Ovary (tissue), 10 donors: ENCODE measurements at regions of chr5 and their contacts with region 1.

Region 1: DNA sequence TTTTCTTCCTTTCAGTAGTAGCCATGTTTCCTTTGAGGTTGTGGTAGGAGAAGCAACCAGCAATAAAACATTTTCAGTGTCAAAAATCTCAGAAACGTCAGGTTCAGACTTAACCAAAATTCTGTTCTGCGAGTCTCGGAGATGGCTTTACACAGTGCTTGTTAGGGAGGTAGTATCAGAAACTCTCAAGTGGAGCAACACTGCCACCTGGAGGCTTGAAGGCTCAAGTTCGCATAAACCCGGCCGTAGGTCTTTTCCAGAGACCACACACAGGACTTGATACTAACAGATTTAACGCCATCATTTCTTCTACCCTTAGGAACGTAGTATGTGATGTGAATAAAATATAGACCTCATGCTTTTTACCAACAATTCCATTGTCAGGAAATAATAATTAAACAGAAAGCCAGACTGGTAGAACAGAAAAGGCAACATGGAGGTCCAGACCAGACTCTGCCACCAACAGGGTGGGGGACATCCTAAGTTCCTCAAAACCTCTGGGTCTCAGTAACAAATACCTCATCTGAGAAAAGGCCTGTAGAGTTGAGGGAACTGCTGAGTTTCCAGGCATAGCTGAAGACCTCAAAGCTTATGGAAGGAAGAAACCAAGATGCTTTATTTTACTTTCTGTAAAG is 8.5 kb downstream of the PTGER4 start:
- DNase-seq: peak; percentile 60 to 82 (median 79)
- H3K4me3 ChIP-seq: no peak overlapping the region
- H3K27ac ChIP-seq: no peak overlapping the region
- H3K4me1 ChIP-seq: no peaks in the 10 kb centered on the region
- H3K27me3 ChIP-seq: no peaks in the 10 kb centered on the region
- CTCF ChIP-seq: peak; percentile 48 to 85 (median 66)
- EP300 ChIP-seq: no peak
- POLR2A ChIP-seq: no peak

Region 2: DNA sequence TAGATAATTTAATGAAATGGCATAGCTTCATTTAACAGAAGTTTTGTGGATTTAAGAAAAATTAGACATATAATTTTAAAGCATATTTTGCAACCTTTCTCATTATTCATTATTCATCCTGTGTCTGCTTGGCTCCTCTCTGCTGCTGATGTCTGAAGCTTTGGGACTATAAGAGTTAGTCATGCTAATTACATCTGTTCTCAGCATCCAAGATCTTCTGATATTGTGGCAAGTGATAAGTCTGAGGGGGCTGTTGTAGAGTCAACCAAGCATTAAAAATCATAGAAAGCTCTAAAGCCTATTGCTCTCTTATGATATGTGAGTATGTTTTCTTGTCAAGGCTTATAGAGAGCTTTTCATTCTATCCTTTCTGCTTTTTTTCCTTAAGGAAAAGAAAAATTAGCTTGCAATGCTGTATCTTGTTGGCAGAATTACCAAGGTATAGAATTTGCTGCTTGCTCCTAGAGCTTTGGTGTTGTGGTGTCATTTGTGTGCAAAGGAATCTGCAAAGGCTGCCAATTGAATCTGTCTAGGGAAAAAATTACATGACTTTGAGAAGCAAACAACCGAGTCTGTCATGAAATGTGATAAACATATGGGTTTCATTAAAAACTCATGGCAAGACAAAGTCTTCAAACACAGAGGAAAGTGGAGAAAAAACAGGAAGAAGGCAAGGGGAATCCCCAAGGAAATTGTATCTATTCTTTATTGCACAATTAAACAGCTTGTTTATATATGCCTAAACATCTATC is 1107.4 kb before region 1 on chr5:
- intact Hi-C with region 1: loop called in 2 of 4 experiments (anchors 10 kb)
- DNase-seq: no peak
- H3K4me3 ChIP-seq: no peak overlapping the region
- H3K27ac ChIP-seq: no peak overlapping the region
- H3K4me1 ChIP-seq: no peaks in the 10 kb centered on the region
- H3K27me3 ChIP-seq: no peaks in the 10 kb centered on the region
- CTCF ChIP-seq: no peak
- EP300 ChIP-seq: no peak
- POLR2A ChIP-seq: no peak

Region 3: DNA sequence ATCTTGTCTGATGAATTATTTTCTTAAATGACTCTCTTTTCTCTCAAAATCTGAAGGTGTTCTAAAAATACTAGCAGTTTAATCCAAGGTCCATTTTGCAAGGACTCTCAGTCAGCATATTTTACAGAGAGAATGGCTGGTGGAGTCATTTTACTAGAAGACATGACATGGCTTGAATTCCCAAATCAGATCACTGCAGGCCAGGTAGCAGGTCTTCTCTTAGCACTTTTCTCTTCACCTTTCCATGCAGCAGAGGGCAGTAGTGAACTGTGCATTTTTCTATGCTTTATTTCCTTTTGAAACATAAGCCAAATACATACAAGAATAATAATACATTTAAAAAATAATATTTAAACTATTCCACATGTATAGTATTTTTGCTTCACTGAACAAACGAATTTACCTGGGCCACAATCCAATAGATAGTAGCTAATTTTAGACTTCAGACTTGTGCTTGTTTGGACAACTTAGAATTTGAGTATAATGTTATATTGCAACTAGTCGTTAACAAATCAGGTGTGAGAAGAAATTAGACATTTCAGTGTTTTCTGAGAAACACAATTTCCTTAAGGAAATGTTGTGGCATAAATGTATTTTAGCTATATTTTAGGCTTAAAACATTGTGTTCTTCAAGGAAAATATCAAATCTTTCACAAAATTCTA is 974.1 kb before region 1 on chr5:
- intact Hi-C with region 1: loop called in 1 of 4 experiments (anchors 10 kb)
- DNase-seq: peak in 1 of 5 donors; percentile 20
- H3K4me3 ChIP-seq: no peak overlapping the region
- H3K27ac ChIP-seq: no peak overlapping the region
- H3K4me1 ChIP-seq: no peaks in the 10 kb centered on the region
- H3K27me3 ChIP-seq: no peaks in the 10 kb centered on the region
- CTCF ChIP-seq: peak in 1 of 3 donors; percentile 21
- EP300 ChIP-seq: no peak
- POLR2A ChIP-seq: no peak

Region 4: DNA sequence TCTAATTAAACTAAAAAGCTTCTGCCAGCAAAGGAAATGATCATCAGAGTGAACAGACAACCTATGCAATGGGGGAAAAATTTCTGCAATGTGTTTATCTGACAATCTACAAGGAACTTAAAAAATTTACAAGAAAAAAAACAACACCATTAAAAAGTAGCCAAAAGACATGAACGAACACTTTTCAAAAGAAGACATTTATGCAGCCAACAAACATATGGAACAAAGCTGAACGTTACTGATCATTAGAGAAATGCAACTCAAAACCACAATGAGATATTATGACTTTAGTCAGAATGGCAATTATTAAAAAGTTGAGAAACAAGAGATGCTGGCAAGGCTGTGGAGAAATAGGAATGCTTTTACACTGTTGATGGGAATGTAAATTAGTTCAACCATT is 733.1 kb before region 1 on chr5:
- intact Hi-C with region 1: loop called in 1 of 4 experiments (anchors 10 kb)
- DNase-seq: no peak
- H3K4me3 ChIP-seq: no peak overlapping the region
- H3K27ac ChIP-seq: no peak overlapping the region
- H3K4me1 ChIP-seq: no peaks in the 10 kb centered on the region
- H3K27me3 ChIP-seq: no peaks in the 10 kb centered on the region
- CTCF ChIP-seq: no peak
- EP300 ChIP-seq: no peak
- POLR2A ChIP-seq: no peak

Region 5: GRCh38 chr5:40557501-40557900 is 130.7 kb before region 1 on chr5:
- intact Hi-C with region 1: no loop called
- DNase-seq: no peak
- H3K4me3 ChIP-seq: no peak overlapping the region
- H3K27ac ChIP-seq: no peak overlapping the region
- H3K4me1 ChIP-seq: no peaks in the 10 kb centered on the region
- H3K27me3 ChIP-seq: no peaks in the 10 kb centered on the region
- CTCF ChIP-seq: no peak
- EP300 ChIP-seq: no peak
- POLR2A ChIP-seq: no peak

Region 6: GRCh38 chr5:40774623-40775022 is 86.4 kb after region 1 on chr5:
- intact Hi-C with region 1: no loop called
- DNase-seq: no peak
- H3K4me3 ChIP-seq: no peak overlapping the region
- H3K27ac ChIP-seq: no peak overlapping the region
- H3K4me1 ChIP-seq: no peaks in the 10 kb centered on the region
- H3K27me3 ChIP-seq: no peaks in the 10 kb centered on the region
- CTCF ChIP-seq: no peak
- EP300 ChIP-seq: no peak
- POLR2A ChIP-seq: no peak